ENCODE measurements at regions of chr10 and their contacts with region 1.

Region 1: DNA sequence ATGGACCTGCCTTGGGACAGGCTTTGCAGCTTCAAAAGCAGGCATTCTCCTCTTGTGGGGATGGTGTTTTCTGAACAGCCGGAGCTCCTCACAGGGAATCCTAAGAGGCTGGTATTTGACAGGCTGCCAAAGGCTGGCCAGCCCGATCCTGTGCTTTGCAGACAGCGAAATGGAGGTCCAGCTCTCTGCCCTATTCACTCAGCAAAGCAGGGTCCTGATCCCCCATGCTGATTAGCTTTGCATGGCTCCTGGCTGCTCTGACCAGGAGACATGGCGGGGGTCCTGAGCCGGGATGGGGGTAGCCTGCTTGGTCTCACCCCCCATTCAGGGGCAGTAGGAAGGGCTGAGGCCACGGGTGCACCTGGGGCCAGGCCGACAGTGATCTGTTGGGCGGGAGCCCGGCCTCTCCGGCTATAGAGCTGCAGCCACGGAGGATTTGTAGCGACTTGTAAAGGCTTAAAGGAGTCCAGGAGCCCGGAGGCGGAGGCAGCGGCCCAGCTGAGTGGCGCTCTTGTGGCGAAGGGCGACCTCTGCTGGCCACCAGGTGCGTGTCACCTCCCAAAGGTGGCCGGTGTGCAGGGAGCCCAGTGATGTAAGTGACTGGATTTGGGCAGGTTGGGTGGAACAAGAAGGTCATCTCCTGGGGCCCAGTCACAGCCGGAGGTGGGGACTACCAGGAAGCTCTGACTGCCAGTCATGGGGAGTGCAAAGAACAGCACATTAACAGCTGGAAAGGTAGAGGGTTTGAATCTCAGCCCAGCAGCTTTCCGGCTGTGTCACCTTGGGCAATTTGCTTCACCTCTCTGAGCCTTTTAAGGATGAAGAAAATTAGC is 126.5 kb downstream of the ZMIZ1 start:
- DNase-seq: peak; percentile 68
- ATAC-seq: peak; percentile 63
- H3K4me3 Mint-ChIP-seq: no peak overlapping the region
- H3K27ac Mint-ChIP-seq: no peak overlapping the region
- H3K4me1 Mint-ChIP-seq: peaks cover 14% of the 10 kb centered on the region
- H3K27me3 Mint-ChIP-seq: peaks cover 8% of the 10 kb centered on the region
- CTCF ChIP-seq: peak; percentile 98

Region 2: GRCh38 chr10:78047314-78047891 is 1147.9 kb before region 1 on chr10:
- CTCF ChIA-PET with region 1: interaction called, 99 read pairs
- POLR2A ChIA-PET with region 1: interaction called, 5 read pairs
- intact Hi-C with region 1: loop called (anchors 1 kb)
- DNase-seq: peak; percentile 63
- ATAC-seq: peak; percentile 74
- H3K4me3 Mint-ChIP-seq: no peak overlapping the region
- H3K27ac Mint-ChIP-seq: no peak overlapping the region
- H3K4me1 Mint-ChIP-seq: peaks cover 22% of the 10 kb centered on the region
- H3K27me3 Mint-ChIP-seq: no peaks in the 10 kb centered on the region
- CTCF ChIP-seq: peak; percentile 45

Region 3: GRCh38 chr10:78437998-78438906 is 757.1 kb before region 1 on chr10:
- CTCF ChIA-PET with region 1: no interaction called
- POLR2A ChIA-PET with region 1: no interaction called
- intact Hi-C with region 1: loop called (anchors 10 kb)
- DNase-seq: no peak
- ATAC-seq: no peak
- H3K4me3 Mint-ChIP-seq: no peak overlapping the region
- H3K27ac Mint-ChIP-seq: no peak overlapping the region
- H3K4me1 Mint-ChIP-seq: no peaks in the 10 kb centered on the region
- H3K27me3 Mint-ChIP-seq: peaks cover 18% of the 10 kb centered on the region
- CTCF ChIP-seq: no peak

Region 4: GRCh38 chr10:78937800-78938694 is 257.3 kb before region 1 on chr10:
- CTCF ChIA-PET with region 1: no interaction called
- POLR2A ChIA-PET with region 1: no interaction called
- intact Hi-C with region 1: loop called (anchors 1 kb)
- DNase-seq: no peak
- ATAC-seq: no peak
- H3K4me3 Mint-ChIP-seq: no peak overlapping the region
- H3K27ac Mint-ChIP-seq: no peak overlapping the region
- H3K4me1 Mint-ChIP-seq: peaks cover 2% of the 10 kb centered on the region
- H3K27me3 Mint-ChIP-seq: peaks cover 27% of the 10 kb centered on the region
- CTCF ChIP-seq: no peak

Region 5: DNA sequence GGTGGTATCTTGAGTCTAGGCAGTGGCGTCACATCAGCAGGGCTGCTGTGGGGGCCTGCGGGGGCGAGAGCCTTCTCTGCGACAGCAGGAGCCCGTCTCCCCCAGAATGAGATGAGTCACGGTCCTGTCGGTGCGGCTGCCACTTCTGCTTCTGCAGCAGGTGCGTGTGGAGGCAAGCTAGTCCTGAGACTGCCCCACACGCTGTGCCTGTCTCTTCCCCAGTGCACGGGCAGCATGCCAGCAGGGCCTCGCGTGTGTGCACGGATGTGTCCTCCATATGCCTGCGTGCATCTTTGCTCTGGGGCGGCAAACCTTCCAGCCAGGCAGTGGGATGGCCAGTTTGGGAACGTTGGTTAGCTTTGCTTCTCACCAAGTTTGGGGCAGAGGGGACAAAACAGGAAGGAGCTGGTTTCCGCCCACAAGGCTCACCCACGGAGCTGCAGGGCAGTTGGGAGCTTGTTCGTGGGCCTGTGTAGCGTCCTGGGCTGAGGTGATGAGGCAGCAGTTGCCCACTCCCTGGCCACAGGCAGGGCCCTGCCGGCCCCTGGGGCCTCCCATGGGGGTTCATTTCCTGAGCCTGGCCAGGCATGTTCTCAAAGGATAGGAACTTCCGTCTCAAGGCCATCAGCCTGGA is 91.1 kb after region 1 on chr10:
- CTCF ChIA-PET with region 1: no interaction called
- POLR2A ChIA-PET with region 1: no interaction called
- intact Hi-C with region 1: loop called (anchors 1 kb)
- DNase-seq: peak; percentile 81
- ATAC-seq: peak; percentile 89
- H3K4me3 Mint-ChIP-seq: peak overlapping the region; percentile 78
- H3K27ac Mint-ChIP-seq: peak overlapping the region; percentile 97
- H3K4me1 Mint-ChIP-seq: peaks cover 79% of the 10 kb centered on the region
- H3K27me3 Mint-ChIP-seq: no peaks in the 10 kb centered on the region
- CTCF ChIP-seq: no peak

Region 6: DNA sequence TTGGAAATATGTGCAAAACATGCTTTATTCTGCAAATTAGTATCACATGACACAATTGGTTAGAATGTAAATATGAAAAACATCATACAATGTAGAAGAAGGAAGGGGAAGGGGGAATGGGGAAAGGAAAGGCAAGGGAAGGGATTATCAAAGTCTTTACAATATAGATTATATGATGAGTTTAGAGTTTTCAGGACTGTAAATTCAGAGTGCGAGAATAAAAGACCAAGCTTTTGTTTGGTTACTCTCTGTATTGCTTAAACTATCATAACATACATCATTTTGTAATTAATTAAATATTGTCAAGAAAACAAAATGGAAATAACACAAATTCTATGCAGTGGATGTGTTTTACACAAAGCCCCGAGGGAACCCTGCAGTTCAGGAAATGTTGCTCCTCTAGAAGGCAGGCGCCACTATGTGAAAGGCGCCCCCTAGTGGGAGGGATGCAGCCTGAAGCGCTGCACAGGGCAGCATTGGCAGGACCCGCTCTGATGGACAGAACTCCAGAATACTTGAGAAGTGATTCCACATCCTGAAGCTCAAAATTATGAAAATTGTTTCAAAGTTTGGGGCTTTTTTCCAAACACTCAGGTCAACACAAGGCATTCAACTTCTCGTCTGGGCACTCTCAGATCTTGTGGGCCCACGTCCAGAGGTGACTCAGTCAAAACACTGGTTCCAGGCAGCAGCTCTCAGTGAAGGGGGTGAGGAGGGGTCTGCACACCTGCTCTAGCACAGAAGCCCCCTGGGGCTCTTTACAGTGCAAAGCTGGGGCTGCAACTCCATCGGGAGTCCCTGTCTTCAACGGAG is 851.5 kb after region 1 on chr10:
- CTCF ChIA-PET with region 1: no interaction called
- POLR2A ChIA-PET with region 1: no interaction called
- intact Hi-C with region 1: no loop called
- DNase-seq: peak; percentile 59
- ATAC-seq: peak; percentile 84
- H3K4me3 Mint-ChIP-seq: no peak overlapping the region
- H3K27ac Mint-ChIP-seq: no peak overlapping the region
- H3K4me1 Mint-ChIP-seq: peaks cover 10% of the 10 kb centered on the region
- H3K27me3 Mint-ChIP-seq: no peaks in the 10 kb centered on the region
- CTCF ChIP-seq: peak; percentile 73